Activated CD8-positive, alpha-beta T cell treated with anti-CD3 and anti-CD28 coated beads for 36 hours (primary cell): ENCODE measurements at regions of chr20 and their contacts with region 1.

Region 1: GRCh38 chr20:63657937-63658748 is at the start of gene RTEL1:
- DNase-seq: peak; percentile 89
- ATAC-seq: peak; percentile 80
- H3K4me3 Mint-ChIP-seq: peak within 1 kb of the TSS; percentile 96
- H3K27ac Mint-ChIP-seq: peak within 1 kb of the TSS; percentile 93
- H3K4me1 Mint-ChIP-seq: peaks cover 24% of the 10 kb centered on the region
- H3K27me3 Mint-ChIP-seq: no peaks in the 10 kb centered on the region
- CTCF ChIP-seq: no peak
- total RNA-seq, gene RTEL1: 37.4 to 39.1 TPM

Region 2: DNA sequence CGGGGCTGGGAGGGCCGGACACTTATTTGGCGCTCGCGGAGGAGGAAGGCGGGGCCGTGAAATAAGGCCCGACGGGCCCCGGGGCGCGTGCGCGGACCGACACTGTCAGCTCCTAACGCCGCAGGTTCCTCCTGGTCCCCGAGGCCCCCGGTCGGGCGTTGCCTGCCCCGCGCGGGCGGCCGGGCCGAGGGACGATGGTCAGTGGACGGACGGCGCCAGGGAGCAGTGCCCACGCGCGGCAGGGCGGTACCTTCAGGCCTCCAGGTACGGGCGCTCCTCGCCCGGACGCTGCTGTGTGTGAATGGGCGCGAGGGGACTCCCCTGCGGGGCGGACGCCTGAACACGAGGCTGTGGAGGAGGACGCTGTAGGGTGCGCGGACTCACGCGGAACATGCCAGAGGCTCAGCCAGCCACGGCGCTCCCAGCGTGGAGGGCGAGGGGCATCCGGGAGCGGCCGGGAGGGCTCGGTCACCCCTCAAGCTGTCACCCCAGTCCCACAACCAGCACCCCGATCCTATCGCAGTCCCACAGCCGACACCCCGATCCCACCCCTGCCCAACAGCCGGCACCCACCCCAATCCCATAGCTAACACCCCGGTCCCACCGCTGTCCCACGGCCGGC is 30.9 kb before region 1 on chr20:
- CTCF ChIA-PET with region 1: no interaction called
- POLR2A ChIA-PET with region 1: interaction called, 13 read pairs
- intact Hi-C with region 1: no loop called
- DNase-seq: peak; percentile 95
- ATAC-seq: peak; percentile 81
- H3K4me3 Mint-ChIP-seq: peak overlapping the region; percentile 93
- H3K27ac Mint-ChIP-seq: peak overlapping the region; percentile 97
- H3K4me1 Mint-ChIP-seq: peaks cover 31% of the 10 kb centered on the region
- H3K27me3 Mint-ChIP-seq: no peaks in the 10 kb centered on the region
- CTCF ChIP-seq: no peak

Region 3: GRCh38 chr20:63864847-63865640 is 206.9 kb after region 1 on chr20 and contains the start of gene TPD52L2:
- CTCF ChIA-PET with region 1: no interaction called
- POLR2A ChIA-PET with region 1: no interaction called
- intact Hi-C with region 1: no loop called
- DNase-seq: peak; percentile 99
- ATAC-seq: peak; percentile 85
- H3K4me3 Mint-ChIP-seq: peak within 1 kb of the TSS; percentile 98
- H3K27ac Mint-ChIP-seq: peak within 1 kb of the TSS; percentile 99
- H3K4me1 Mint-ChIP-seq: peaks cover 19% of the 10 kb centered on the region
- H3K27me3 Mint-ChIP-seq: no peaks in the 10 kb centered on the region
- CTCF ChIP-seq: no peak
- total RNA-seq, gene TPD52L2: 43.1 to 44.6 TPM